ENCODE measurements at regions of chr6 and their contacts with region 1.

Region 1: GRCh38 chr6:121940728-121941127 is 458.7 kb upstream of the HSF2 start:
- DNase-seq: no peak
- H3K4me3 ChIP-seq: no peak overlapping the region
- H3K27ac ChIP-seq: no peak overlapping the region
- H3K27me3 ChIP-seq: no peaks in the 10 kb centered on the region
- CTCF ChIP-seq: no peak

Region 2: DNA sequence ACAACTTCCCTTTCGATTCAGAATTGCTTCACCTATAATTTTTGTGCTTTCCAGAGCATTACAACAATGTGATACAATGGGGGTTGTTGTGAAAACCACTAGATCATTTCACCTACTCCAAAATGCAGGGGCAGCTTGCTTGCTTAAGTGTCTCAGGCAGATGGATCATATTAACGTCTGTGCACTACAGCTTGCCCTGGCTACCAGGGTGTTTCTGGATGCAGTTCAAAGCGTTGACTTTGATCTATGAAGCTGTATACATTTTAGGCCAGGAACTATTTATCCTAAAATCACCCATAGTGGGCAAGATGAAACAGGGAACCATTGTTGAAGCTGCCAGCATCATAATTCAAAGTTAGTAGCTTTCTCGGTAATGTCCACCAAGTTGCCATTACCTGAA is 119.2 kb after region 1 on chr6:
- CTCF ChIA-PET with region 1: no interaction called
- POLR2A ChIA-PET with region 1: interaction called, 10 read pairs
- DNase-seq: no peak
- H3K4me3 ChIP-seq: no peak overlapping the region
- H3K27ac ChIP-seq: no peak overlapping the region
- H3K27me3 ChIP-seq: no peaks in the 10 kb centered on the region
- CTCF ChIP-seq: no peak

Measured in AG04450 (cell line).